ENCODE measurements at regions of chr14 and their contacts with region 1.

Region 1: DNA sequence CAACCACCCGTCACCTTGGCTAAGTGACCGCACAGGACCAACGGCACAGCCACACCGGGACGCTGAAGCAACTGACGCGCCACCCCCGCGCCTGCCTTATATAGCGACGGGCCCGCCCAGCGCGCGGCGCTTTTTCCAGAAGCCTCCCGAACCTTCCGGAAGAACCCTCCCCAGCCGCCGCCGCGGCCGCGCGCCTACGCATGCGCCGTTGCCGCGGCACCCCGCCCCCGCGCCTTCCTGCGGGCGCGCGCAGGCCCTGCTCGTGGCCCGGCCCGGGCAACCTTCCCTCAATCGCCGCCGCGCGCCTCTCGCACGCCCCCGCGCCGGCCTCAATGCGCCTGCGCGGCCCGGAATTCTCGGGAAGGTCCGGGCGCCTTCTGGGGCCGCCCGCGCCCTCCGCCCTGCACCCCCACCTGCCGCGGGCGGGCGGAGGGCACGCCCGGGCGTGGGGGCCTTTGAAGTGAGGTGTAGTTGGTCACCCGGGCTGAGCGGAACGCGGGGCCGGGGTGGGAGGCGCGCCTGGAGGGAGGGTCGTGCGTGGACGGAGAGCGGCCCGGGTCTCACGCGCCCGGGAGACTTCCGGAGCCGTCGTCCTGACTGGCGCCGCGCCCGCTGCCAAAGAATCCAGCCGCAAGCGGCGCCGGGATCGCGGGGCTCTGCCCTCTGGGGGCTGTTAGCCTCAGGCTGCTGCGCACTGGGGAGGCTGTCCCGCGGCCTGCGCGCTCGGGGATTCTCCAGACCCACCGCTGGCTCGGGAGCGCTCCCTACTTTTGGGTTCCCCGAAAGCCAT is at the start of gene HSP90AA1:
- H3K4me3 Mint-ChIP-seq: peak within 1 kb of the TSS; percentile 85
- H3K27ac Mint-ChIP-seq: peak within 1 kb of the TSS; percentile 98
- H3K4me1 Mint-ChIP-seq: peaks cover 53% of the 10 kb centered on the region
- H3K27me3 Mint-ChIP-seq: peaks cover 2% of the 10 kb centered on the region

Region 2: GRCh38 chr14:101947906-101948665 is 139.1 kb before region 1 on chr14:
- intact Hi-C with region 1: loop called (anchors 5 kb)
- H3K4me3 Mint-ChIP-seq: peak overlapping the region; percentile 94
- H3K27ac Mint-ChIP-seq: peak overlapping the region; percentile 100
- H3K4me1 Mint-ChIP-seq: peaks cover 26% of the 10 kb centered on the region
- H3K27me3 Mint-ChIP-seq: peaks cover 39% of the 10 kb centered on the region

Region 3: GRCh38 chr14:102316743-102317563 is 229.8 kb after region 1 on chr14:
- intact Hi-C with region 1: loop called (anchors 2 kb)
- H3K4me3 Mint-ChIP-seq: peak overlapping the region; percentile 80
- H3K27ac Mint-ChIP-seq: peak overlapping the region; percentile 79
- H3K4me1 Mint-ChIP-seq: peaks cover 41% of the 10 kb centered on the region
- H3K27me3 Mint-ChIP-seq: peaks cover 12% of the 10 kb centered on the region

Measured in dendritic cell treated with granulocyte-macrophage colony-stimulating factor and Interleukin-4, amounts not matched to agents 40 ng/mL and 50 ng/mL, for 4 days (primary cell).